B cell (primary cell): ENCODE measurements at regions of chr17 and their contacts with region 1.

Region 1: GRCh38 chr17:3959295-3959925 is 4.8 kb downstream of the ATP2A3 start:
- DNase-seq: no peak
- ATAC-seq: no peak
- H3K4me3 ChIP-seq: no peak overlapping the region
- H3K4me3 Mint-ChIP-seq: peak overlapping the region; percentile 98
- H3K27ac ChIP-seq: peak overlapping the region; percentile 25 to 81
- H3K27ac Mint-ChIP-seq: peak overlapping the region; percentile 96
- H3K4me1 ChIP-seq: peaks cover 55 to 82% of the 10 kb centered on the region in 2 donors
- H3K4me1 Mint-ChIP-seq: peaks cover 66% of the 10 kb centered on the region
- H3K27me3 ChIP-seq: no peaks in the 10 kb centered on the region
- H3K27me3 Mint-ChIP-seq: no peaks in the 10 kb centered on the region
- CTCF ChIP-seq: no peak

Region 2: GRCh38 chr17:3893003-3893719 is 66.2 kb before region 1 on chr17 and contains the start of gene CAMKK1:
- CTCF ChIA-PET with region 1: no interaction called
- POLR2A ChIA-PET with region 1: interaction called, 4 read pairs
- intact Hi-C with region 1: loop called (anchors 1 kb)
- DNase-seq: peak; percentile 95
- ATAC-seq: peak; percentile 86
- H3K4me3 ChIP-seq: peak within 1 kb of the TSS; percentile 14 to 75 (median 64)
- H3K4me3 Mint-ChIP-seq: peak within 1 kb of the TSS; percentile 93
- H3K27ac ChIP-seq: peak within 1 kb of the TSS; percentile 56 to 57
- H3K27ac Mint-ChIP-seq: peak within 1 kb of the TSS; percentile 89
- H3K4me1 ChIP-seq: peaks cover 20 to 42% of the 10 kb centered on the region in 2 donors
- H3K4me1 Mint-ChIP-seq: peaks cover 40% of the 10 kb centered on the region
- H3K27me3 ChIP-seq: no peaks in the 10 kb centered on the region
- H3K27me3 Mint-ChIP-seq: no peaks in the 10 kb centered on the region
- CTCF ChIP-seq: no peak
- total RNA-seq, gene CAMKK1: 35.9 and 37.1 TPM in 2 replicates

Region 3: GRCh38 chr17:3935140-3935542 is 24.3 kb before region 1 on chr17:
- CTCF ChIA-PET with region 1: interaction called, 17 read pairs
- POLR2A ChIA-PET with region 1: interaction called, 6 read pairs
- intact Hi-C with region 1: no loop called
- DNase-seq: peak; percentile 72
- ATAC-seq: peak; percentile 61
- H3K4me3 ChIP-seq: no peak overlapping the region
- H3K4me3 Mint-ChIP-seq: no peak overlapping the region
- H3K27ac ChIP-seq: peak overlapping the region in 1 of 2 donors; percentile 30
- H3K27ac Mint-ChIP-seq: peak overlapping the region; percentile 61
- H3K4me1 ChIP-seq: no peaks in the 10 kb centered on the region
- H3K4me1 Mint-ChIP-seq: no peaks in the 10 kb centered on the region
- H3K27me3 ChIP-seq: no peaks in the 10 kb centered on the region
- H3K27me3 Mint-ChIP-seq: no peaks in the 10 kb centered on the region
- CTCF ChIP-seq: peak; percentile 57

Region 4: GRCh38 chr17:3978421-3979279 is 19.2 kb after region 1 on chr17:
- CTCF ChIA-PET with region 1: no interaction called
- POLR2A ChIA-PET with region 1: no interaction called
- intact Hi-C with region 1: no loop called
- DNase-seq: no peak
- ATAC-seq: no peak
- H3K4me3 ChIP-seq: no peak overlapping the region
- H3K4me3 Mint-ChIP-seq: no peak overlapping the region
- H3K27ac ChIP-seq: no peak overlapping the region
- H3K27ac Mint-ChIP-seq: no peak overlapping the region
- H3K4me1 ChIP-seq: peaks cover 6 to 11% of the 10 kb centered on the region in 2 donors
- H3K4me1 Mint-ChIP-seq: peaks cover 15% of the 10 kb centered on the region
- H3K27me3 ChIP-seq: no peaks in the 10 kb centered on the region
- H3K27me3 Mint-ChIP-seq: no peaks in the 10 kb centered on the region
- CTCF ChIP-seq: no peak

Region 5: GRCh38 chr17:4004517-4005295 is 45.3 kb after region 1 on chr17:
- CTCF ChIA-PET with region 1: interaction called, 153 read pairs
- POLR2A ChIA-PET with region 1: interaction called, 7 read pairs
- intact Hi-C with region 1: loop called (anchors 1 kb)
- DNase-seq: peak; percentile 80
- ATAC-seq: peak; percentile 71
- H3K4me3 ChIP-seq: no peak overlapping the region
- H3K4me3 Mint-ChIP-seq: peak overlapping the region; percentile 20
- H3K27ac ChIP-seq: no peak overlapping the region
- H3K27ac Mint-ChIP-seq: no peak overlapping the region
- H3K4me1 ChIP-seq: peaks cover 16 to 35% of the 10 kb centered on the region in 2 donors
- H3K4me1 Mint-ChIP-seq: peaks cover 27% of the 10 kb centered on the region
- H3K27me3 ChIP-seq: no peaks in the 10 kb centered on the region
- H3K27me3 Mint-ChIP-seq: no peaks in the 10 kb centered on the region
- CTCF ChIP-seq: peak; percentile 98

Region 6: DNA sequence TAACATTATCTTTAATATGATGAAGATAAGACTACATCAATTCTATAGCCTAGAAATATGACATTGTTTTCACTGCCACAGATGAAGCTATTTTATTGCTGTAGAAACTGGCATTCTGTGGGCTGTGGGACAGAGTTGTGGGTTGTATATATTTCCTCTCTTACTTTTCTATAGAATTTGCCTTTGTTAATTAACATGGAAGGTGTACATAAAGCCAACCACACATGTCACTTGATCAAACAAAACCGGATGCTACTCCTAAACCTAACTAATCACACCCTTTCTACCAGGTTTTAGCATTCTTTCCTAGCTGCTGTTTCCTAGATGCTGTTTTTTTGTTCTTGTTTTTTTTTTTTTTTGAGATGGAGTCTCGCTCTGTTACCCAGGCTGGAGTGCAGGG is 86.1 kb after region 1 on chr17:
- CTCF ChIA-PET with region 1: no interaction called
- POLR2A ChIA-PET with region 1: no interaction called
- intact Hi-C with region 1: no loop called
- DNase-seq: no peak
- ATAC-seq: no peak
- H3K4me3 ChIP-seq: no peak overlapping the region
- H3K4me3 Mint-ChIP-seq: no peak overlapping the region
- H3K27ac ChIP-seq: no peak overlapping the region
- H3K27ac Mint-ChIP-seq: no peak overlapping the region
- H3K4me1 ChIP-seq: no peaks in the 10 kb centered on the region
- H3K4me1 Mint-ChIP-seq: peaks cover 3% of the 10 kb centered on the region
- H3K27me3 ChIP-seq: no peaks in the 10 kb centered on the region
- H3K27me3 Mint-ChIP-seq: no peaks in the 10 kb centered on the region
- CTCF ChIP-seq: no peak

Region 7: GRCh38 chr17:4074831-4075495 is 115.6 kb after region 1 on chr17:
- CTCF ChIA-PET with region 1: interaction called, 3 read pairs
- POLR2A ChIA-PET with region 1: no interaction called
- intact Hi-C with region 1: loop called (anchors 1 kb)
- DNase-seq: peak; percentile 75
- ATAC-seq: peak; percentile 53
- H3K4me3 ChIP-seq: no peak overlapping the region
- H3K4me3 Mint-ChIP-seq: peak overlapping the region; percentile 75
- H3K27ac ChIP-seq: peak overlapping the region; percentile 20 to 54
- H3K27ac Mint-ChIP-seq: peak overlapping the region; percentile 76
- H3K4me1 ChIP-seq: peaks cover 13 to 17% of the 10 kb centered on the region in 2 donors
- H3K4me1 Mint-ChIP-seq: peaks cover 18% of the 10 kb centered on the region
- H3K27me3 ChIP-seq: no peaks in the 10 kb centered on the region
- H3K27me3 Mint-ChIP-seq: no peaks in the 10 kb centered on the region
- CTCF ChIP-seq: peak; percentile 78

Region 8: DNA sequence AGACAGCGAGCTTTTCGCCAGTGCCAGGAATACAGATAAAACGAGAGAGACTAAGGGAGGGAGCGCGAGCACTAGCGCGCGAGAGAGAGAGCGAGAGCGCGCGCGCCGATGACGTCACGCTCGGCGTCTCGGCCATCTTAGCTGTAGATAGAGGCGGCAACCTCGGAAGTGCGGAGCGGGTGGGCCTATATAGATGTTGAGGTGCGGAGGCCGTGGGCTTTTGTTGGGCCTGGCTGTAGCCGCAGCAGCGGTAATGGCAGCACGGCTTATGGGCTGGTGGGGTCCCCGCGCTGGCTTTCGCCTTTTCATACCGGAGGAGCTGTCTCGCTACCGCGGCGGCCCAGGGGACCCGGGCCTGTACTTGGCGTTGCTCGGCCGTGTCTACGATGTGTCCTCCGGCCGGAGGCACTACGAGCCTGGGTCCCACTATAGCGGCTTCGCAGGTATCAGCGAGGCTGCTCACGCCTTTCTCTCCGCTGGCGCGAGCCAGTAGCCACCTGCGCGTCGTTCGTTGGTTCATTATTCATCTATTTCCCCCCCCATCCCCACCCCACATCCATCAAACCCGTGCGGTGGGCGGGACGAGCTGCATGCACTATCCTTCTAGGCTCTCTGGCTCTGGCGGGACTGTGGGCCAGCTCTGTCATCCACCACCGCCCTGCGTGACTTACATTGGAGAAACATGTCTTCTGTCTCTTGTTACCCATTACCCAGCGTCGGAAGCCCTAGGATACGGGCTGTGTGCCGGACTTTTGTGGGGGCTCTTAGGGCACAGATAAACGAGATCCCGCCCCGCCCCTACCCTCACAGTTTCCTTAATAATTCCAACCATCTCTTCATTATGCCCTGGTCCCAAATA is 184.4 kb after region 1 on chr17:
- CTCF ChIA-PET with region 1: no interaction called
- POLR2A ChIA-PET with region 1: interaction called, 6 read pairs
- intact Hi-C with region 1: loop called (anchors 1 kb)
- DNase-seq: peak; percentile 97
- ATAC-seq: peak; percentile 69
- H3K4me3 ChIP-seq: peak overlapping the region; percentile 65 to 95 (median 93)
- H3K4me3 Mint-ChIP-seq: peak overlapping the region; percentile 94
- H3K27ac ChIP-seq: peak overlapping the region; percentile 98 to 99
- H3K27ac Mint-ChIP-seq: peak overlapping the region; percentile 100
- H3K4me1 ChIP-seq: peaks cover 22 to 26% of the 10 kb centered on the region in 2 donors
- H3K4me1 Mint-ChIP-seq: peaks cover 39% of the 10 kb centered on the region
- H3K27me3 ChIP-seq: no peaks in the 10 kb centered on the region
- H3K27me3 Mint-ChIP-seq: no peaks in the 10 kb centered on the region
- CTCF ChIP-seq: no peak